Calu3 (cell line): ENCODE measurements at regions of chr3 and their contacts with region 1.

Region 1: GRCh38 chr3:101381809-101382208 is 61.4 kb upstream of the IMPG2 start:
- DNase-seq: no peak
- H3K4me3 Mint-ChIP-seq: no peak overlapping the region
- H3K27ac Mint-ChIP-seq: no peak overlapping the region
- H3K4me1 Mint-ChIP-seq: no peaks in the 10 kb centered on the region
- H3K27me3 Mint-ChIP-seq: no peaks in the 10 kb centered on the region
- CTCF ChIP-seq: no peak

Region 2: GRCh38 chr3:100737334-100737733 is 644.5 kb before region 1 on chr3:
- CTCF ChIA-PET with region 1: no interaction called
- intact Hi-C with region 1: loop called (anchors 2 kb)
- DNase-seq: peak; percentile 8
- H3K4me3 Mint-ChIP-seq: no peak overlapping the region
- H3K27ac Mint-ChIP-seq: no peak overlapping the region
- H3K4me1 Mint-ChIP-seq: peaks cover 13% of the 10 kb centered on the region
- H3K27me3 Mint-ChIP-seq: no peaks in the 10 kb centered on the region
- CTCF ChIP-seq: peak; percentile 32

Region 3: GRCh38 chr3:100899440-100900091 is 482.2 kb before region 1 on chr3:
- CTCF ChIA-PET with region 1: no interaction called
- intact Hi-C with region 1: loop called (anchors 5 kb)
- DNase-seq: no peak
- H3K4me3 Mint-ChIP-seq: no peak overlapping the region
- H3K27ac Mint-ChIP-seq: no peak overlapping the region
- H3K4me1 Mint-ChIP-seq: peaks cover 12% of the 10 kb centered on the region
- H3K27me3 Mint-ChIP-seq: no peaks in the 10 kb centered on the region
- CTCF ChIP-seq: no peak

Region 4: DNA sequence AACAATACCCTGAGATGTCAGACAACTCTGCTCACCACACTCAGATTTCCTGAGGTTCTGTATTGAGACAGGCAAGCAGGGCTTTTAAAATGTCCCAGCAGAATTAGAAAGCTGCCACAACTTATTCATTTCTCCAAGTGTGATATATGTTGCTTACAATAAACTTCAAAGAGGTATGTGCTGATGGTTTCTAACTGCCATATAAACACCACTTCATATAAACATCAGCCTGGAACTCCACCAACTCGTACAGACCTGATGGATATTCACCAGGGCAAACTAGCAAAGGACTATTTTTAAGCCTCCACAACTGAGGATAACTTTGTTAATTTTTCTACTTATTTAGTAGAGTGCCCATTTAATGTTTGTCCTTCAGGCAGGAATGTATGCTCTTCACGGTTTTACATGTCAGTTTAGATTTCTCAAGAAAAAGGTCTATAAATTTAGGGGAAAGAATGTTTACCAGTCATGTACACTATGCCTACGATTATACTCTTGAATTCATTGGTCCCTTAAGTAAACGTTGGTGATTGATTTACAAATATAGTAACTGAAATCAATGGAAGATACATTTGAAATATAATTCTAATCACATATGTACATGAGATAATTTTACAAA is 279.0 kb before region 1 on chr3:
- CTCF ChIA-PET with region 1: no interaction called
- intact Hi-C with region 1: no loop called
- DNase-seq: no peak
- H3K4me3 Mint-ChIP-seq: no peak overlapping the region
- H3K27ac Mint-ChIP-seq: no peak overlapping the region
- H3K4me1 Mint-ChIP-seq: no peaks in the 10 kb centered on the region
- H3K27me3 Mint-ChIP-seq: no peaks in the 10 kb centered on the region
- CTCF ChIP-seq: no peak

Region 5: GRCh38 chr3:101212730-101213129 is 169.1 kb before region 1 on chr3:
- CTCF ChIA-PET with region 1: no interaction called
- intact Hi-C with region 1: loop called (anchors 5 kb)
- DNase-seq: no peak
- H3K4me3 Mint-ChIP-seq: no peak overlapping the region
- H3K27ac Mint-ChIP-seq: no peak overlapping the region
- H3K4me1 Mint-ChIP-seq: no peaks in the 10 kb centered on the region
- H3K27me3 Mint-ChIP-seq: no peaks in the 10 kb centered on the region
- CTCF ChIP-seq: no peak

Region 6: DNA sequence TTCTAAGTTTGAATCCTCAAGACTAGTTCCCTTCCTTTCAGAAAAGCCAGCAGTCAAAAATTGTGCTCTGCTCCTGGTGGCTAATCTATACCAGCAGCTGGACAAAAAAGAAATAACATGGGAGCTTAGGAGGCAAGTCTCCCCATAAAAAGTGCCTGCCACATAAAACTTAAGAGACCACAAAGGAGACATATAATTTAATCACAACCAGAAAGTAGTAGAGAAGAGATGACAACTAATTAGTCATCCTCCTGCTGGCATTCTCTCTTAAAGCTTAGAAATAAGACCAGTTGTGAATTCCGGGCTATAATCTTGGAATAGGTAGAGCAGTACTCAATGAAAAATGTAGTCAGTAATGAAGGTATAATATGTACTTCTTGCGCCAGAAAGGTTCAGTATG is 41.2 kb before region 1 on chr3:
- CTCF ChIA-PET with region 1: no interaction called
- intact Hi-C with region 1: no loop called
- DNase-seq: no peak
- H3K4me3 Mint-ChIP-seq: no peak overlapping the region
- H3K27ac Mint-ChIP-seq: no peak overlapping the region
- H3K4me1 Mint-ChIP-seq: no peaks in the 10 kb centered on the region
- H3K27me3 Mint-ChIP-seq: no peaks in the 10 kb centered on the region
- CTCF ChIP-seq: no peak